Ascending aorta (tissue), 2 donors: ENCODE measurements at regions of chr9 and their contacts with region 1.

Region 1: DNA sequence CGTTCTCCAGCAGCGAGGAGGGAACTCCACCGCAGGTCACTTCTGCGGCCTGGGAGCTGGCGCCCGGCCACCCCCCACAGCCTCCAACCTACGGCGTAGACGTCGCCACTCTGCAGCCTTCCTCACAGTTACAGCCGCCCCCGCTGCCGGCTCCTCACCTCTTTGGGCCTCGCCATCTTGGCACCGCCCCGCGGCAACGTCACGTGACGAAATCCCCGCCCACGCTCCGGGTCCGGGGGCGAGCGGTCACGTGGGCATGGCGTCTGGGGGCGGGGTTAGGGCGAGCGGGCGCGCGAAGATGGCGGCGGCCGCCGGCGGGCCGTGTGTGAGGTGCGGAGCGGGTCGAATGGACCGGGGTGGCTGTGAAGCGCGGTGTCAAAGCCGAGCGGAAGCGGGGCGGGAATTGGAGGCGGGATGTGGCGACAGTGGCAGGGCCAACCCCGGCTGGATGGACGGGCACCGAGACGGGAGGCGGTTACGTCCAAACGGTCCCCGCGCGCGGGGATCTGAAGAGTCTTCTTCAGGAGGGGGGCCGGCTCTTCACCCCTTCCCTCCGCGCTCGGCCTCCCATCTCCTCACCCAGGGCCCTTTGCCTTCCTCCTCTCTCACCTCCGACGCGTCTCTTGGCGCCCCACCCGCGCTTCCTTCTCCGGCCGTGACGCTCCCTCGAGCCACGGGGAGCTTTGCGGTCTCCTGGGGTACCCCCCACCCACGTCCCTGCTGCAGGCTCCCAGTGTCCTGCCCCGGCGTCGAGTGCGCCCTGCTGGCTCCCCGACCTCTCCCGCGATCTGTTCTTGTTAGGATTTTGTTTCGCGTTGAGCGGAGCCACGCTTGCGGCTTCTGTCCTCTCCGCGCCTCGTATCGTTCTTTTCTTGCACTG is at the starts of genes DOLK and NUP188:
- DNase-seq: peak; percentile 82 to 98
- H3K4me3 ChIP-seq: peak within 1 kb of the TSS; percentile 73 to 88
- H3K27ac ChIP-seq: peak within 1 kb of the TSS; percentile 92 to 96
- H3K4me1 ChIP-seq: peaks cover 5 to 20% of the 10 kb centered on the region in 2 donors
- H3K27me3 ChIP-seq: no peaks in the 10 kb centered on the region
- CTCF ChIP-seq: peak in 1 of 3 experiments; percentile 2
- total RNA-seq, gene DOLK: 5.0 TPM
- total RNA-seq, gene NUP188: 45.0 TPM

Region 2: GRCh38 chr9:128881901-128882681 is 65.6 kb before region 1 on chr9 and contains the starts of genes KYAT1 and LRRC8A:
- intact Hi-C with region 1: loop called (anchors 2 kb)
- DNase-seq: peak; percentile 93 to 99
- H3K4me3 ChIP-seq: peak within 1 kb of the TSS; percentile 89 to 90
- H3K27ac ChIP-seq: peak within 1 kb of the TSS; percentile 96 to 98
- H3K4me1 ChIP-seq: peaks cover 25 to 46% of the 10 kb centered on the region in 2 donors
- H3K27me3 ChIP-seq: no peaks in the 10 kb centered on the region
- CTCF ChIP-seq: peak in 1 of 3 experiments; percentile 4
- total RNA-seq, gene KYAT1: 4.9 TPM
- total RNA-seq, gene LRRC8A: 227 TPM

Region 3: DNA sequence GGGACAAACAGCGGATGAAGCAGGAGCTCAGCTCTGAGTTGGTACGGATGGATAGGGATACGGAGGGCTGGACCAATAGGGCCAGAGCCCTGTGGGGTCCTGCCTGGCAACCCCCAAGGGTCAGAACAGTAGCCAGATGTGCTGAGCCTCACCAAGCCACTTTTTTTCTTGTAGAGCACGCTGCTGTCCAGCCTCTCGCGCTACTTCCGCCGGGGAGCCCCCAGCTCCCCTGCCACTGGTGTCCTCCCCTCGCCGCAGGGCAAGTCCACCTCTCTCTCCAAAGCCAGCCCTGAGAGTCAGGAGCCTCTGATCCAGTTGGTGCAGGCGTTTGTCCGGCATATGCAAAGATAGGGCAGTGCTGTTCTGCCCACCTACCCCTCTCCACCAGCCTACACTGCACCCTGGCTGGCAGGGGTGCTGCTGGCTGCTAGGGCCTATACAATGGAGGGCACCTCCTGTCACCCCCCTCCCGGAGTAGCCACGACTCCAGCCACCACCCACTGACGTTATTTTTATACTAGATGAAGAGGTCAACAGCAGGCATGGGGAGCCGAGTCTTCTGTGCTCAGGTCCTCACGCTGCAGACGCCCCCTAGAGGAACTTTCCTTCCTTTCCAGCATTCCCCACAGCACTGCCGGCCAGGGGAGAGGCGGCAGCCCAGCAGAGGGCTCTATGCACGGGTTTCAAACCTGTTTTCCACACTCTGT is 58.8 kb after region 1 on chr9:
- intact Hi-C with region 1: loop called (anchors 5 kb)
- DNase-seq: peak in 1 of 2 donors; percentile 86
- H3K4me3 ChIP-seq: no peak overlapping the region
- H3K27ac ChIP-seq: peak overlapping the region; percentile 61 to 70
- H3K4me1 ChIP-seq: peaks cover 0 to 18% of the 10 kb centered on the region in 2 donors
- H3K27me3 ChIP-seq: no peaks in the 10 kb centered on the region
- CTCF ChIP-seq: peak; percentile 76 to 88 (median 76)

Region 4: GRCh38 chr9:129036241-129036922 is 88.7 kb after region 1 on chr9 and contains the start of gene MIGA2:
- intact Hi-C with region 1: loop called (anchors 1 kb)
- DNase-seq: peak; percentile 97 to 99
- H3K4me3 ChIP-seq: peak within 1 kb of the TSS; percentile 84 to 97
- H3K27ac ChIP-seq: peak within 1 kb of the TSS; percentile 62 to 81
- H3K4me1 ChIP-seq: peaks cover 0 to 13% of the 10 kb centered on the region in 2 donors
- H3K27me3 ChIP-seq: no peaks in the 10 kb centered on the region
- CTCF ChIP-seq: no peak
- total RNA-seq, gene MIGA2: 39.9 TPM

Region 5: GRCh38 chr9:129610473-129611301 is 663.0 kb after region 1 on chr9:
- intact Hi-C with region 1: no loop called
- DNase-seq: peak in 1 of 2 donors; percentile 90
- H3K4me3 ChIP-seq: peak overlapping the region; percentile 63 to 84
- H3K27ac ChIP-seq: peak overlapping the region; percentile 91 to 92
- H3K4me1 ChIP-seq: peaks cover 5 to 46% of the 10 kb centered on the region in 2 donors
- H3K27me3 ChIP-seq: no peaks in the 10 kb centered on the region
- CTCF ChIP-seq: peak; percentile 74 to 100 (median 81)